ENCODE measurements at regions of chr17 and their contacts with region 1.

Region 1: DNA sequence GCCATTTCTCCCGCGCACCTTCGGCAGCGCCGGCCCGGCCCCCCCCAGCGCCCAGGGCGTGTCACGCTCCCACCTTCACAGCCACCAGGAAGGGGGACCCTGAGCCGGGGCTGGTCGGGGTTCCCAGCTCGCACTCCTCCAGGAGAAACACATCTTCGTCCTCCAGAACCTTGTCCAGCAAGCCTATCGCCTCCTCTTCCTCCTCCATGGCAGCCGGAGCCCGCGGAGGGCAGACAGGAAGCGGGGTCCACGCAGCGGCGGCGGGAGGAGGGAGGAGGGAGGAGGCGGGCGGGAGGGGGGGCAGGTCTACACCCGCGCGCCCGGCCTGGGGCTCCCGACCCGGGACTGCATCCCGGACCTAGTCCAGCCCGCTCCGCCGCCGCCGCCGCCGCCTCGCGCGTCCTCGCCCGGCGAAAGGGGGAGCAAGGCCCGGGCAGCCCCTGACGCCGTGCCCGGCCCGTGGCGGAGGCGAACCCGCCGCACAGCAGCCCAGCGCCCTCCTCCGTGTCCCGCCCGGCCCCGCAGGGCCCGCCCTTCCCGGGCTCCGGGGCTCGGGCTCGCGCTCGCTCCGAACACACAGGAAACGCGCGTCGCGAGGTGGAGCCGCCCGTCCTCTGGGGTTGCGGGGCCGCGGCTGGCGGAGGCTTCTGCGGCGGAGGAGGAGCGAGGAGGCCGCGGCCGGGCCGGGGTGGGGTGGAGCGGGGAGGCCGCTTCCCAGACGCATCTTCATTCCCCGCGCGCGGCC is 70.7 kb downstream of the ABR start:
- DNase-seq: peak; percentile 80
- H3K4me3 Mint-ChIP-seq: peak overlapping the region; percentile 83
- H3K27ac Mint-ChIP-seq: peak overlapping the region; percentile 89
- H3K4me1 Mint-ChIP-seq: peaks cover 55% of the 10 kb centered on the region
- H3K27me3 Mint-ChIP-seq: no peaks in the 10 kb centered on the region

Region 2: GRCh38 chr17:1130191-1130590 is 21.2 kb after region 1 on chr17:
- CTCF ChIA-PET with region 1: no interaction called
- POLR2A ChIA-PET with region 1: no interaction called
- DNase-seq: no peak
- H3K4me3 Mint-ChIP-seq: no peak overlapping the region
- H3K27ac Mint-ChIP-seq: no peak overlapping the region
- H3K4me1 Mint-ChIP-seq: no peaks in the 10 kb centered on the region
- H3K27me3 Mint-ChIP-seq: no peaks in the 10 kb centered on the region

Region 3: GRCh38 chr17:1442187-1442586 is 333.2 kb after region 1 on chr17:
- CTCF ChIA-PET with region 1: no interaction called
- POLR2A ChIA-PET with region 1: interaction called, 12 read pairs
- DNase-seq: no peak
- H3K4me3 Mint-ChIP-seq: no peak overlapping the region
- H3K27ac Mint-ChIP-seq: no peak overlapping the region
- H3K4me1 Mint-ChIP-seq: peaks cover 16% of the 10 kb centered on the region
- H3K27me3 Mint-ChIP-seq: no peaks in the 10 kb centered on the region